CD14-positive monocyte (primary cell): ENCODE measurements at regions of chr1 and their contacts with region 1.

Region 1: GRCh38 chr1:155897746-155898145 is 13.4 kb downstream of the RIT1 start:
- DNase-seq: no peak
- H3K4me3 ChIP-seq: no peak overlapping the region
- H3K4me3 Mint-ChIP-seq: no peak overlapping the region
- H3K27ac ChIP-seq: no peak overlapping the region
- H3K27ac Mint-ChIP-seq: peak overlapping the region in 2 of 7 donors; percentile 33 to 43
- H3K4me1 ChIP-seq: peaks cover 10 to 14% of the 10 kb centered on the region in 2 donors
- H3K4me1 Mint-ChIP-seq: peaks cover 14% of the 10 kb centered on the region
- H3K27me3 ChIP-seq: no peaks in the 10 kb centered on the region
- H3K27me3 Mint-ChIP-seq: no peaks in the 10 kb centered on the region
- CTCF ChIP-seq: no peak

Region 2: GRCh38 chr1:155859234-155859829 is 38.4 kb before region 1 on chr1 and contains the start of gene SYT11:
- intact Hi-C with region 1: loop called in 1 of 2 experiments (anchors 5 kb)
- DNase-seq: peak; percentile 91 to 95 (median 95)
- H3K4me3 ChIP-seq: peak within 1 kb of the TSS; percentile 44 to 84 (median 78)
- H3K4me3 Mint-ChIP-seq: peak within 1 kb of the TSS; percentile 80 to 87
- H3K27ac ChIP-seq: peak within 1 kb of the TSS; percentile 83 to 88
- H3K27ac Mint-ChIP-seq: peak within 1 kb of the TSS; percentile 95 to 99 (median 96)
- H3K4me1 ChIP-seq: peaks cover 45 to 58% of the 10 kb centered on the region in 2 donors
- H3K4me1 Mint-ChIP-seq: peaks cover 38% of the 10 kb centered on the region
- H3K27me3 ChIP-seq: no peaks in the 10 kb centered on the region
- H3K27me3 Mint-ChIP-seq: peaks cover 0 to 1% (median 0%) of the 10 kb centered on the region in 3 donors
- CTCF ChIP-seq: no peak
- polyA plus RNA-seq, gene SYT11: 5.1 to 11.0 (median 9.6) TPM

Region 3: DNA sequence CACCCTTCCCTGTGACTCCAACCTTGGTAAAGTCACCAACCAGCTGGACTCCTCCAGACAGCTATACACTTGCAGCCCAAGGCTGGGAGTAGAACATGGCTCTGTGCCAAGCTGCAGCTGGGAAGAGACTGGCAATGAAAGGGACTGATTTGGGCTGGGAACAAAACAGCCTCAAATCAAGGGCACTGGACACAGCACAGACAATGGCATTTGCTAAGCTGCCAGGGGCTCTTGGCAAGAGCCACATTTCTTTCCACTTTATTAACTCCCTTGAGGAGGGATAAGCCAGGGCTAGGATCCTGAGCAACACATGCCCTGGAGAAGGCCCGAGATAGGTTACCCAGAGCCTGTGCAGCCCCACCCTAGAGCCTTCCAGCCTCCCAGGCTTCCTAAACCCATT is 26.4 kb before region 1 on chr1:
- intact Hi-C with region 1: no loop called
- DNase-seq: no peak
- H3K4me3 ChIP-seq: no peak overlapping the region
- H3K4me3 Mint-ChIP-seq: no peak overlapping the region
- H3K27ac ChIP-seq: no peak overlapping the region
- H3K27ac Mint-ChIP-seq: no peak overlapping the region
- H3K4me1 ChIP-seq: no peaks in the 10 kb centered on the region
- H3K4me1 Mint-ChIP-seq: no peaks in the 10 kb centered on the region
- H3K27me3 ChIP-seq: no peaks in the 10 kb centered on the region
- H3K27me3 Mint-ChIP-seq: peaks cover 0 to 2% (median 1%) of the 10 kb centered on the region in 3 donors
- CTCF ChIP-seq: no peak

Region 4: DNA sequence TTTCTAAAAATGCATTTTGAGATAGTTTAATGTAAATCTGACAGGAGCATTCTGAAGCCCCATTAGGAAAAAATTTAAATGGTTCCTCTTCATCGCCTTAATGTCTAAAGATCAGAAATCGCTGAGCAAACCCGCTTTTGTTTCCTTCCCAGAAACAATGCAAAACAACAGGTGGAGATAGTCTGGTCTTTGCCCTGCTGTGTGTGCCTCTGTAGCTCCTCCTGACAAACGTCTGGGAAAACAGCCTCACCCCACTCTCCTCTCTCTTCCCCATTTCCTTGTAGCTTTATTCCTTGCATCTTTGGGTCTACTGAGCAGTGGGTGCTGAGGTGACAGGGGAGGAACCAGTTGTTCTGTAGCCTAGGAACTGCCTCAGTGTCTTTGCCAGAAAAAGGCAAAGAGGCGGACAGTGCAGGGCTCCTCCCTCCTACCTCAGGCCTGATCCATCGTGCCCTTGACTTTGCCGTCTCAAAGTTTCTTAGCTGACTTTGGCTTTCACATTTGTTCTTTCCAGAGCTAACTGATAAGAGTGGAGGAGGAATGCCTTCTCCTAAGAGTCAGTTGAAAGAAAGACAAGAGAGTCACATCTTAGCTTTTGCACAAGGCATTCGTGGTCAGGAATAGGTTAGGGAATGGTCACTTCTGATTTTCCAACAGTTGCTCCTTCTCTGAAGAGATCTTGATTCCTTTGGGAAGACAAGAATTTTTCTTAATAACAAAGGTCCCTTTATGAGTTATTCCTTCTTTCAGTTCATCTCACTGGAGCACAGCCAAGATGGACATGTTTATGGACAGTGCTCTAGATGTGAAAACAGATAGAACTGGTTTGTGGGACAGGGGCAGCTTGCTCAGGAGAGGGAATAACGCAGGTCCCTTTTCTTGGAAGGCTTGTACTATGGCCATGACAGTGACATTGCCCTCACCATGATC is 13.4 kb before region 1 on chr1:
- intact Hi-C with region 1: no loop called
- DNase-seq: no peak
- H3K4me3 ChIP-seq: no peak overlapping the region
- H3K4me3 Mint-ChIP-seq: no peak overlapping the region
- H3K27ac ChIP-seq: no peak overlapping the region
- H3K27ac Mint-ChIP-seq: peak overlapping the region in 1 of 7 donors; percentile 28
- H3K4me1 ChIP-seq: no peaks in the 10 kb centered on the region
- H3K4me1 Mint-ChIP-seq: no peaks in the 10 kb centered on the region
- H3K27me3 ChIP-seq: no peaks in the 10 kb centered on the region
- H3K27me3 Mint-ChIP-seq: peaks cover 0 to 2% (median 1%) of the 10 kb centered on the region in 3 donors
- CTCF ChIP-seq: no peak